ENCODE measurements at regions of chr2 and their contacts with region 1.

Region 1: GRCh38 chr2:86440631-86441391 is at the start of gene KDM3A:
- DNase-seq: peak; percentile 97 to 99
- H3K4me3 ChIP-seq: peak within 1 kb of the TSS; percentile 75
- H3K27ac ChIP-seq: peak within 1 kb of the TSS; percentile 99
- H3K4me1 ChIP-seq: peaks cover 24% of the 10 kb centered on the region
- H3K27me3 ChIP-seq: no peaks in the 10 kb centered on the region
- CTCF ChIP-seq: no peak
- total RNA-seq, gene KDM3A: 31.8 and 39.3 TPM in 2 replicates

Region 2: GRCh38 chr2:86195055-86195807 is 245.6 kb before region 1 on chr2 and contains the start of gene IMMT:
- CTCF ChIA-PET with region 1: no interaction called
- POLR2A ChIA-PET with region 1: interaction called, 6 read pairs
- intact Hi-C with region 1: loop called (anchors 2 kb)
- DNase-seq: peak; percentile 89 to 96
- H3K4me3 ChIP-seq: peak within 1 kb of the TSS; percentile 93
- H3K27ac ChIP-seq: peak within 1 kb of the TSS; percentile 97
- H3K4me1 ChIP-seq: peaks cover 38% of the 10 kb centered on the region
- H3K27me3 ChIP-seq: no peaks in the 10 kb centered on the region
- CTCF ChIP-seq: no peak
- total RNA-seq, gene IMMT: 108 and 114 TPM in 2 replicates

Region 3: DNA sequence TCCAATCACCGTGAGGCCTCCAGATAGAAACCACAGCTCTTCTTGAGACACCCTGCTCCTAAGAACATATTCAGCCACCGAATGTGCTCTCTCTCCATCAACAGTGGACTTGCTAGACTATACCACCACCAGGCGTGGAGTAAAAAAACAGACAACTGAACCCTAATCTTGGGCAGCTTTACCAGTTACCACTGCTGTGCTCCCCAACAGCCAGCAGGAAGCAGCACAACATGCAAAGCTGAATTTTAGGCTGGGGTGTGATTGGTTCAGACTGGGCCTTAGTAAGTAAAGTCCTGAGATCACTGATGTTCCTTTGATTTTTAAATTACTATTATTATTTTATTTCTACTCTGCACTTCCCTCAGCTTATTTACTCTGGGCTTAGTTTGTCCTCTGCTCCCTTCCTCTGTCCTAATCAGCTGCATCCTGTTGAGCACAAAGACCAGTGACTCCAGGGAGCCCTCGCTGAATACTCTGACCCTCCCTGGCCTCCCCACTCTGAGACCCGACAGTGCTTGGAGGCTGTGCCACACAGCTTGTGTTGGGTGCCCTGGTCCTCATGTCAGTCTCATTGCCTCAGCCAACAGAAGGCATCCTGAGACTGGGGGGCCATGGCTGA is 219.6 kb before region 1 on chr2:
- CTCF ChIA-PET with region 1: no interaction called
- POLR2A ChIA-PET with region 1: no interaction called
- intact Hi-C with region 1: no loop called
- DNase-seq: peak in 1 of 2 experiments; percentile 30
- H3K4me3 ChIP-seq: no peak overlapping the region
- H3K27ac ChIP-seq: no peak overlapping the region
- H3K4me1 ChIP-seq: no peaks in the 10 kb centered on the region
- H3K27me3 ChIP-seq: 0 out of 2 replicates have a peak, but pooled peaks cover 3% of the 10 kb centered on the region
- CTCF ChIP-seq: peak; percentile 86

Region 4: DNA sequence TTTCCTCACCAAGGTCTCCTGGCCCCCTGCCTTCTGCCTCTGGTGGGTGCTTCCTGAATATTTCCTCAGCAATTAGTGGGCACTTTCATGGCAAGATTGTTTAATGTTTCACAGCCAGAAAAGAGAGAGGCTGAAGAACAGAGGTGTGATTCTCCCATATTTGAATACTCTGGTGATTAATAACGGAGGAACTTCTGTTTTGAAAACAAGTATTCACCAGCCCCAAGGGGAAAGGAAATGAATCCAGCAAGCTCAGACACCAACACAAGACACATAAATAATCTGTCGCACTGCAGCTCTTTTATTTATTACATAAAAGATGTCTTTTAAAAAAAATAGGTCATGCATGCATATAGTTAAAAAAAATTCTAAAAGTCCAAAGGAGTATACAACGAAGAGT is 183.8 kb before region 1 on chr2:
- CTCF ChIA-PET with region 1: no interaction called
- POLR2A ChIA-PET with region 1: no interaction called
- intact Hi-C with region 1: no loop called
- DNase-seq: no peak
- H3K4me3 ChIP-seq: no peak overlapping the region
- H3K27ac ChIP-seq: no peak overlapping the region
- H3K4me1 ChIP-seq: no peaks in the 10 kb centered on the region
- H3K27me3 ChIP-seq: no peaks in the 10 kb centered on the region
- CTCF ChIP-seq: no peak

Region 5: GRCh38 chr2:86368161-86368824 is 72.5 kb before region 1 on chr2:
- CTCF ChIA-PET with region 1: no interaction called
- POLR2A ChIA-PET with region 1: no interaction called
- intact Hi-C with region 1: loop called (anchors 5 kb)
- DNase-seq: peak; percentile 36 to 44
- H3K4me3 ChIP-seq: peak overlapping the region; percentile 44; the same call in 1 of the 2 replicates
- H3K27ac ChIP-seq: no peak overlapping the region
- H3K4me1 ChIP-seq: peaks cover 4% of the 10 kb centered on the region
- H3K27me3 ChIP-seq: no peaks in the 10 kb centered on the region
- CTCF ChIP-seq: peak; percentile 71

Region 6: DNA sequence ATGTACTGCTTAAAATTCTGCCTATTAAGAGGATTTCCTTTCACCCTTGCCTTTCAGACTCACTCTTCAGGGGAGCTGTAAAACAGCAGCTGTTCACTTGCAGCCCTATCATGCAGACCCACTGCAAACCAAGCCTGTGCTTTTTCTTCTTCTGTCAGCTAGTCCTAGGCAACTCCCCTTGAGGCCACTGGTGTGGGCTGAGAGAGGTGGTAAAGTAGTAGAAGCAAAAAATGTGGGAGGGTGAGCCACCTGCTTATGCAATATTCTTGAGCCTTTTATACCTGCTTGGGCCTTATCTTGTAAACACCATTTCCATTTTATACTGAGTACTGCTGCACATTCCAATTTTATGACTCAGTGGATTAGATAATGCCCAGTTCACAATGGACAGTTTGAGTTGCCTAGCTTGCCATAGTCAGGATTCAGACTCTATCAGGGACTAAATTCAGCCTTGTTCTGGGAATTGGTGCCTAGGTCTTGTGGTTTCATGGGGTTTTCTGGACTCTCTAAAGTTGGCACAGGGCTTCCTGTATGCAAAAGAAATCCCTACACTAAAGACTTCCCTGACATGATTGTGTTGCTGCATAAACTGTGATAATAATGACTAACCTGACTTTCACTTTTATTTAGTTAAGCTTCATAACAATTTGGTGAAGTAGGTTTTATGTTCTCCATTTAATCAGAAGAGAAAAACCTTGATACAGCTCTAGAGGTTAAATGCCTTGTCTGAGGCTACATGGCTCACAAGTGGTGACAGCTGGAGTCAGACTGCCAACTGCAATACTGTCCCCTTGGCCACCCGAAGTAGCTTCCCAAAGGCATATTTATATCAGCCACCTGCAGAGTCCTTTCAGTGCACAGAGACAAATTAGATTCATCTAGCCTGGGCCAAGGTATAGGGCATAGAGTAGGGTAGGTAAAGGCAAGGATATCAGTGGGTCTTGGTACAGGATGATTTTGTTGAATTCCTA is 47.0 kb before region 1 on chr2:
- CTCF ChIA-PET with region 1: interaction called, 4 read pairs
- POLR2A ChIA-PET with region 1: interaction called, 3 read pairs
- intact Hi-C with region 1: loop called (anchors 2 kb)
- DNase-seq: peak; percentile 56 to 88
- H3K4me3 ChIP-seq: no peak overlapping the region
- H3K27ac ChIP-seq: no peak overlapping the region
- H3K4me1 ChIP-seq: peaks cover 17% of the 10 kb centered on the region
- H3K27me3 ChIP-seq: no peaks in the 10 kb centered on the region; the same call in 1 of the 2 replicates
- CTCF ChIP-seq: no peak

Region 7: GRCh38 chr2:86518481-86518880 is 77.7 kb after region 1 on chr2:
- CTCF ChIA-PET with region 1: no interaction called
- POLR2A ChIA-PET with region 1: no interaction called
- intact Hi-C with region 1: no loop called
- DNase-seq: no peak
- H3K4me3 ChIP-seq: no peak overlapping the region
- H3K27ac ChIP-seq: no peak overlapping the region
- H3K4me1 ChIP-seq: no peaks in the 10 kb centered on the region
- H3K27me3 ChIP-seq: no peaks in the 10 kb centered on the region
- CTCF ChIP-seq: no peak; the same call in 1 of the 2 replicates

Region 8: GRCh38 chr2:86562922-86563649 is 122.3 kb after region 1 on chr2 and contains the start of gene CHMP3:
- CTCF ChIA-PET with region 1: interaction called, 4 read pairs
- POLR2A ChIA-PET with region 1: no interaction called
- intact Hi-C with region 1: loop called (anchors 1 kb)
- DNase-seq: peak; percentile 84 to 94
- H3K4me3 ChIP-seq: peak within 1 kb of the TSS; percentile 74
- H3K27ac ChIP-seq: peak within 1 kb of the TSS; percentile 94
- H3K4me1 ChIP-seq: peaks cover 14% of the 10 kb centered on the region
- H3K27me3 ChIP-seq: no peaks in the 10 kb centered on the region
- CTCF ChIP-seq: no peak
- total RNA-seq, gene CHMP3: 108 and 120 TPM in 2 replicates

Measured in PC-9 (cell line).